ENCODE measurements at regions of chr15 and their contacts with region 1.

Region 1: GRCh38 chr15:51162865-51163762 is 68.4 kb upstream of the TNFAIP8L3 start:
- DNase-seq: peak; percentile 65
- H3K4me3 ChIP-seq: peak overlapping the region; percentile 47
- H3K27ac ChIP-seq: peak overlapping the region; percentile 74
- H3K4me1 ChIP-seq: peaks cover 9% of the 10 kb centered on the region
- H3K27me3 ChIP-seq: no peaks in the 10 kb centered on the region
- CTCF ChIP-seq: peak; percentile 98

Region 2: DNA sequence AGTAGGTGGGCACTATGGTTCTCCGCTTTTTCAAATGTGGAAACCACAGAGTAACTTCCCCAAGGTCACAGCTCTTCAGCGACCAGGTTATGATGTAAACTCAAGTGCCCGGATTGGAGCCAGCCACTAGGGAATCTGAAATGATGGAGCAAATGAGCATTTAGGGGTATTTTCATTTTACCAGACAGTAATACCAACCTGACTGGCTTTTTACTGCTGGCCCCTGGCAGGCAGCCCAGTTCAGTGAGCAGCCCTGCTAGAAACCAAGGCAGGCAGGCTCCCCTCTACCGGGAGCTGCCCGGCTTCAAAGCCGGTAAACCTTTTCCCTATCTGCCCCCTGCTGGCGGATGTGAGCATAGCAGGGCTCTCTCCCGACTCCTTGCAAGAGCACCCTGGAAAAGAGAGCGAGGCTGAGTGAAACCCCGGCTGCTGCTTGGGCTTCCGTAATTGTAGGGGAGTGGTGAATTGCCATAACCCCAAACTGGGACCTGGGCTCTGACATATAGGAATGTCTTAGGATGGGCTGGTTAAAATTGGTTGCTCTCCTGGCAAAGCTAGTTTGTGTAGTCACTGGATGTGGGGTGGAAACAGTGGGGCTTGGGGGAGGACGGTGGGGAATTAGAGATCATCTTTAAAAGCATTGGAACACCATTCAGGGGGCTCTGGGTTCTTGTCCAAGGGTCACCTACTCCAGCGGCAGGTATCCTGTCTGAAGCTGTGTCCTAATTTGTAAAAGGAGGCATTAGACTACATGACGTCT is 29.6 kb after region 1 on chr15:
- intact Hi-C with region 1: loop called (anchors 2 kb)
- DNase-seq: peak; percentile 87
- H3K4me3 ChIP-seq: no peak overlapping the region
- H3K27ac ChIP-seq: no peak overlapping the region
- H3K4me1 ChIP-seq: peaks cover 52% of the 10 kb centered on the region
- H3K27me3 ChIP-seq: peaks cover 29% of the 10 kb centered on the region
- CTCF ChIP-seq: peak; percentile 96

Region 3: GRCh38 chr15:51349156-51349844 is 186.2 kb after region 1 on chr15:
- intact Hi-C with region 1: no loop called
- DNase-seq: no peak
- H3K4me3 ChIP-seq: no peak overlapping the region
- H3K27ac ChIP-seq: peak overlapping the region; percentile 72
- H3K4me1 ChIP-seq: peaks cover 38% of the 10 kb centered on the region
- H3K27me3 ChIP-seq: no peaks in the 10 kb centered on the region
- CTCF ChIP-seq: no peak

Measured in left ventricle myocardium inferior (tissue), 1 donor.